Activated CD4-positive, alpha-beta T cell treated with anti-CD3 and anti-CD28 coated beads, Interleukin-2, amount 10 ng/mL, durations not matched to agents 24 days and 14 days (primary cell): ENCODE measurements at regions of chr1 and their contacts with region 1.

Region 1: GRCh38 chr1:64744492-64745180 is at the start of gene RAVER2:
- DNase-seq: peak; percentile 82
- H3K4me3 Mint-ChIP-seq: peak within 1 kb of the TSS; percentile 83
- H3K27ac Mint-ChIP-seq: peak within 1 kb of the TSS; percentile 29
- H3K4me1 Mint-ChIP-seq: peaks cover 5% of the 10 kb centered on the region
- H3K27me3 Mint-ChIP-seq: peaks cover 32% of the 10 kb centered on the region
- total RNA-seq, gene RAVER2: 0.44 and 0.54 TPM in 2 replicates

Region 2: DNA sequence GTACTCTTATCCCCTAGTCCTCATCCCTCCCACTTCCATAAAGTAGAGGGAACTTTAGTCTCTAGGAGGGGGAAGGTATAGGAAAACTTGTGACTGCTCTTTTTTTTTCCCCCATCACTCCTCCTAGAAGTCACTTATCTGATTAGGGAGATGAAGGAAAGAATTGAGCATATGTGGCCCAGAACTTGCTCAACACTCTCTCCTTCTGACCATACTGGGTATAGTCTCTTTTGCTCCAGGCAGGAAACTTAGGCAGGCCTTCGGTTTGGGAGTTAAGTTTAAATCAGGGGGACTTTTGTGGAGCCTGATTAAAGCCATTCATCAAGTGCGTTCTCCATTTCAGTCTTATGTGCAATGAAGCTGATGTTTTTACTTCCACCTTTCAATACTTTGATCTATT is 535.4 kb before region 1 on chr1:
- intact Hi-C with region 1: no loop called
- DNase-seq: peak; percentile 36
- H3K4me3 Mint-ChIP-seq: no peak overlapping the region
- H3K27ac Mint-ChIP-seq: no peak overlapping the region
- H3K4me1 Mint-ChIP-seq: no peaks in the 10 kb centered on the region
- H3K27me3 Mint-ChIP-seq: peaks cover 27% of the 10 kb centered on the region

Region 3: GRCh38 chr1:65075123-65075976 is 330.7 kb after region 1 on chr1:
- intact Hi-C with region 1: loop called (anchors 10 kb)
- DNase-seq: peak; percentile 90
- H3K4me3 Mint-ChIP-seq: no peak overlapping the region
- H3K27ac Mint-ChIP-seq: no peak overlapping the region
- H3K4me1 Mint-ChIP-seq: peaks cover 5% of the 10 kb centered on the region
- H3K27me3 Mint-ChIP-seq: peaks cover 6% of the 10 kb centered on the region

Region 4: GRCh38 chr1:66000033-66000637 is 1255.5 kb after region 1 on chr1:
- intact Hi-C with region 1: no loop called
- DNase-seq: no peak
- H3K4me3 Mint-ChIP-seq: no peak overlapping the region
- H3K27ac Mint-ChIP-seq: no peak overlapping the region
- H3K4me1 Mint-ChIP-seq: no peaks in the 10 kb centered on the region
- H3K27me3 Mint-ChIP-seq: peaks cover 14% of the 10 kb centered on the region